ENCODE measurements at regions of chr11 and their contacts with region 1.

Region 1: GRCh38 chr11:124415356-124415923 is 9.2 kb downstream of the OR8B4 start:
- DNase-seq: no peak
- H3K4me3 Mint-ChIP-seq: no peak overlapping the region
- H3K27ac Mint-ChIP-seq: no peak overlapping the region
- H3K4me1 Mint-ChIP-seq: no peaks in the 10 kb centered on the region
- H3K27me3 Mint-ChIP-seq: peaks cover 3% of the 10 kb centered on the region

Region 2: DNA sequence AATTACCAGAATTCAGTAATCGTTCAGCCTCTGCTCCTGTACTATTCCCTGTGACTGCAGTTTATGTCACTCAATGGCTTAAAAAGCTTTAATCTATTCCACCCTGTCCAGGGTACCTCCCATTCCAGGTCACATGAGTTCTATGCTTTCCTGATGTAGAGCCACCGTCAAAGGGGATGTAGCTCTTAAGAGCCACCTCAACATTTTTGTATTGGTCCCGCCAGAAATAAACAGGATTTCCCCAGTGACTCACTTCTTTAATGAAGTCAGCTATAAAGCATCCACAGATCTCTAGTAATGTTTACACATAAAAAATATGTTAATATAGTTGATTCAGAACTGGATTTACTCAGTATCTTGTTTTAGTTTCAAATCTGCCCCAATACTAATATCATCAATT is 100.4 kb before region 1 on chr11:
- CTCF ChIA-PET with region 1: no interaction called
- DNase-seq: no peak
- H3K4me3 Mint-ChIP-seq: no peak overlapping the region
- H3K27ac Mint-ChIP-seq: no peak overlapping the region
- H3K4me1 Mint-ChIP-seq: no peaks in the 10 kb centered on the region
- H3K27me3 Mint-ChIP-seq: no peaks in the 10 kb centered on the region

Region 3: GRCh38 chr11:124402326-124402922 is 13.0 kb before region 1 on chr11:
- CTCF ChIA-PET with region 1: interaction called, 27 read pairs
- DNase-seq: peak; percentile 63
- H3K4me3 Mint-ChIP-seq: no peak overlapping the region
- H3K27ac Mint-ChIP-seq: no peak overlapping the region
- H3K4me1 Mint-ChIP-seq: no peaks in the 10 kb centered on the region
- H3K27me3 Mint-ChIP-seq: no peaks in the 10 kb centered on the region

Region 4: DNA sequence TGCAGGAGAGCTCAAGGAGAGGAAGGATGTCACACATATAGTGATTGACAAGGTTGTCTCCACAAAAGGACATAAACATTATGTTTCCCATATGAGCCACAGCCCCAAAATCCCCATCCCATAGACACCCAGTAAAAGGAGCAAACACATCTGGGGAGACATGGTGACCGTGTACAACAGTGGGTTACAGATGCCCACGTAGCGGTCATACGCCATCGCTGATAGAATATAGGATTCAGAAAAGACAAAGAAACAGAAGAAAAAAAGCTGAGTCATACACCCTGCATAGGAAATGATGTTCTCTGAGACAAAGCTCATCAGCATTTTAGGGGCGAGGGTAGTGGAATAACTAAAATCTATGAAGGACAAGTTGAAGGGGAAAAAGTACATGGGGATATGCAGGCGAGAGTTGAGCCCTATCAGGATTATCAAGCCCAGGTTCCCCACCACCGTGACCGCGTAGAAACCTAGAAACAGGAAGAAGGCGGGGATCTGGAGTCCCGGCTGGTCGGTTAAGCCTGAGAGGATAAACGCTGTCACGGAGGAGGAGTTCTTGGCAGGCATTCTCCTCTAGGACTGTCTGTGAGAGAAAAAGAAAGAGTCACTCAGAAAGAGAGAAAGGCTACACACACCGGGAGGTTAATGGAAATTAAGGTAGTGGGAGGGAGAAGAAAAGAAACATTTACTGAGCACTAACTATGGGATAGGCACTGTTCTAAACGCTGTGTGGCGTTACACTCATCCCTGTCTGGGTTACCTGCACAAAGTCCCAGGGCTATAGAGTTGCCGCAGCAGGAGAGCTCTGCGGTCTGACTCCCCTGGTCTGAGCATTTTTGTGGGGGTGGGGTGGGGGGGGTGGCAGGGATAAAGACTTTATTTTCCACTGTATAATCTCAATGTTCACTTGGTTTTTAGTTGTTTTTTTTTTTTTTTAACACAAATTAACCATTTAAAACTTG is 66.2 kb after region 1 on chr11:
- CTCF ChIA-PET with region 1: no interaction called
- DNase-seq: no peak
- H3K4me3 Mint-ChIP-seq: no peak overlapping the region
- H3K27ac Mint-ChIP-seq: no peak overlapping the region
- H3K4me1 Mint-ChIP-seq: peaks cover 6% of the 10 kb centered on the region
- H3K27me3 Mint-ChIP-seq: peaks cover 10% of the 10 kb centered on the region

Region 5: GRCh38 chr11:124586238-124586860 is 170.9 kb after region 1 on chr11:
- CTCF ChIA-PET with region 1: interaction called, 23 read pairs
- DNase-seq: peak; percentile 52
- H3K4me3 Mint-ChIP-seq: no peak overlapping the region
- H3K27ac Mint-ChIP-seq: no peak overlapping the region
- H3K4me1 Mint-ChIP-seq: no peaks in the 10 kb centered on the region
- H3K27me3 Mint-ChIP-seq: peaks cover 5% of the 10 kb centered on the region

Measured in activated naive CD4-positive, alpha-beta T cell treated with anti-CD3 and anti-CD28 coated beads, Interleukin-2, amount 10 ng/mL, durations not matched to agents 7 days and 5 days (primary cell).